ENCODE measurements at regions of chr22 and their contacts with region 1.

Region 1: GRCh38 chr22:32660292-32660691 is 141.2 kb upstream of the TIMP3 start:
- DNase-seq: peak; percentile 71
- H3K4me3 Mint-ChIP-seq: no peak overlapping the region
- H3K27ac Mint-ChIP-seq: no peak overlapping the region
- H3K4me1 Mint-ChIP-seq: peaks cover 7% of the 10 kb centered on the region
- H3K27me3 Mint-ChIP-seq: no peaks in the 10 kb centered on the region
- CTCF ChIP-seq: peak; percentile 93

Region 2: DNA sequence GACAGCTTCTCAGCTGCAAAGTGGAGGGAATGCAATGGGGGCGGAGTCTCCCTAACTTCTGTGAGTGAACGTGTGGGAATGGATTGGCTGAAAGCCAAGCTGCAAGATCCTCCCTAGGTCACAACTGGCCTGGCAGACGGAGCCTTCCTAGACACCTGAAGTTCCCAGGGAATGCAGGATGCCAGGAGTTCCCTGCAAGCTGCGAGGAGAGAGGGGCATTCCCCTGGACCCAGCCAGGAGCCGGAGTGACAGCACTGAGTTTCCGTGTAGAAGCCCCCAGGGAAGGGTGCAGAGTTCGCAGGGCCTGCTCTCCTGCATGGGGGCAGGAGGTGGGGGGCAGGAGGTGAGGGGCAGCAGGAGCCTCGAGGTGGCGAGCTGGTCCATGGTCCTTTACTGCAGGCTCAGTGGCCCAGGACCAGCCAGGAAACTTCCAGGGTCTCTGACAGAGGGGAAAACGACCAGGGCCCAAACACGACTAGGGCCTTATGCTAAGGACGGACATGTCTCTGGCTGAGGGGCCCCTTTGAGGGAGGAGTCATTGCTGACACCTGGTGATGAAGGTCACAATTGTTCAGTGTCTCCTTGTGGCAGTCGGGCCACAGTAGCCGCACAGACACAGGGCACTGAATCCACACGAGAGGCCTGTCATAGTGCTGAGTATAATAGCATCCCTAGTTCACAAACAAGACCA is 44.3 kb before region 1 on chr22:
- CTCF ChIA-PET with region 1: no interaction called
- POLR2A ChIA-PET with region 1: no interaction called
- intact Hi-C with region 1: no loop called
- DNase-seq: peak; percentile 31
- H3K4me3 Mint-ChIP-seq: no peak overlapping the region
- H3K27ac Mint-ChIP-seq: no peak overlapping the region
- H3K4me1 Mint-ChIP-seq: no peaks in the 10 kb centered on the region
- H3K27me3 Mint-ChIP-seq: no peaks in the 10 kb centered on the region
- CTCF ChIP-seq: no peak

Region 3: DNA sequence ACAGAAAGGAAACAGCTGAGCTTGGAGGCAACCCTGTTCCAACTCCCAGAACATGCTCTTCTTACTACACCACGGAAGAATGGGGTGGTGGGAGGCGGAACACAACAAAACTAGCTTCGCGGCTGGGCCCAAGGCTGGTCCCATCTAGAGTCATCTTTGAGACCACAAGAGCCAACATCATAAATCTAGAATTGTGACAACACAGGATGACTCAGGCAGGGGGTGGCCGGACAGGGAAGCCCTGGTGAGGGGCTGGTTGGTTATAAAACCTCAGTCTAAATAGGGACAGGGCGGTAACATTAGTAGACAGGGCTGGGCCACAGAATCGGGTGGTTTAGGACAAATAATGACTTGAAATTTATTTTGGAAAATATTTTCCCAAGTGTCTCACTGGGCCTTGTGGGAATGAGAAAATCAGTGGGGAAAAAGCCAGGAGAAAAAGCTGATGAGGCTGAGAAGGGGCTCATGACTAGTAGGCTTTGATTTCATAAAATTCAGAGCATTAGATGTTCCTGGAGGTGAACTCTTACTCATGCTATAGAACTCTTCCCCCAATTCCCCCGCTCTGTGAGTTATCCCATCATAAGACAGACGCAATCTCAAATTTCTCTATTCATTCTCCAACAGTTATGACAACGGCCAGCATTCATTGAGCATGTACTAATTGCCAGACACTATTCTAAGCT is 10.6 kb before region 1 on chr22:
- CTCF ChIA-PET with region 1: interaction called, 10 read pairs
- POLR2A ChIA-PET with region 1: interaction called, 4 read pairs
- intact Hi-C with region 1: no loop called
- DNase-seq: no peak
- H3K4me3 Mint-ChIP-seq: no peak overlapping the region
- H3K27ac Mint-ChIP-seq: peak overlapping the region; percentile 50
- H3K4me1 Mint-ChIP-seq: peaks cover 4% of the 10 kb centered on the region
- H3K27me3 Mint-ChIP-seq: no peaks in the 10 kb centered on the region
- CTCF ChIP-seq: no peak

Region 4: DNA sequence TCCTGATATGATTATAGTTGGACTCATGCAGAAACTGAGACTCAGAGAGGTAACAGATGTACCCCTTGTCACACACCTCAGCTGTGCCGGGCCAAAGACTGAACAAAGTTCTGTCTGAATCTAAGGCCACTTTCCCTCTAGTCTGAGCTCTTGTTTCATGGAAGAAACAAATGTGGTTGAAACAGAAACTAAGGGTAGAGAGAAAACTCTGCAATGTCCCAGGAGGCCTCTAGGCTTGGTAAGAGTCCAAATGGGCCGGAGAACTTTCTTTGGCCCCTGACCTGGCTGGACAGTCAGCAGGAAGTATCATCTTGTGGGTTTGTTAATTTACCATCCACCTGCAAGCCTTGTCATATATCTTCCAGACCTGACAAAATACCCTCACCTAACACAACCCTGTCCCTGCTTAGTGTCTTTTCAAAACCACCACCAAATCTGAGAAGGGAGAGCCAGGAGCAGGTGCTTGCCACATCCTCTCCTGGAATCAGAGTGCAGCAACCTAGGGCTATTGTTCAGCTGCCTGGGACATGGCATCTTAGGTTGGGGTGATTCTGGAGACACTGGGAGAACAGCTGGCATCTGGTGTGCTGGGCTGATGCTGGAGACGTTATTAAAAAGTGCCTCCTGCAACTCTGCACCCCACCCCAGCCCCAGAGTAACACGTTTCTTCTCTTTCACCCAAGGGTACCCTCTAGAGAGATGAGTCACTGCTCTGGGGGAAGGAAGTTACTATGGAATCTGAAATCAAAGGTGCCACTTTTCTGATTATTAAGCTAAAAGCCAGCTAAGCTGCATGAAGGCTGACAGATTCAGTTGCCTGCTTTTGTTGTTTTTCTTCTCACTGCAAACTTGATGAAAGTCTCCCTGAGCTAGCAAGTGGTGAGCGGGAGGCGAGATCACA is 14.9 kb after region 1 on chr22:
- CTCF ChIA-PET with region 1: interaction called, 10 read pairs
- POLR2A ChIA-PET with region 1: interaction called, 13 read pairs
- intact Hi-C with region 1: no loop called
- DNase-seq: no peak
- H3K4me3 Mint-ChIP-seq: no peak overlapping the region
- H3K27ac Mint-ChIP-seq: no peak overlapping the region
- H3K4me1 Mint-ChIP-seq: peaks cover 10% of the 10 kb centered on the region
- H3K27me3 Mint-ChIP-seq: peaks cover 9% of the 10 kb centered on the region
- CTCF ChIP-seq: no peak

Region 5: DNA sequence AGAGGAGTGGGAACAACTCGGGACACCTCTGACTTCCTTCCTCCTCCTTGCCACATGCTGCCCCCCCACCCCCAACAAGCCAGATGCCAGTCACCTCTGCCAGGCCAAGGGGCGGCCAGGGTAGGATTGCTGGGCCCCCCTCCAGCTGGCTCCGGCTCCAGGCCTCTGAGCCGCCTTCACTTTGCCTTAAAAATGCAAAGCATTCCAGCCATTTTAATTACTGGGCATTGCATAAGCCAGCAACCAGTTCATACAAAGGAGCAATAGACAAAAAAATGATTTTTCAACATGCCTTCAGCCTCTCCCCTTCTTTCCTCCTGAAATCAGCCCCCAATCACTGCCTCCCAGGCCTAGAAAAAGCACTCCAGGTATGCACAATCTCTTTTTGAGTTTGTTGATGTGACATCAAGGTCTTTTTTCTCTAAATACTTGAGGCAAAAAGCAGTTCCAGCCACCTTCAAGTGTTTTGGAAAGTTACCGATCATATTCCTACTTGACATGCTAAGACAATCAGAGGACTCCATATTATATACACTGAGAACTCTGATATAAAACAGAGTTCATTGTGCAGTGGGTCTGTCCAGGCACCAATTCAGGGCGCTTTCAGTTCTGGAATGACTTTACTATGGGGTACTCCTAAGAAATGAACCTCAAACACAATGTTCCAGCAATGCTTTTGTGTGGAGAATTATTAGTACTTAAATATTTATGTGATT is 128.8 kb after region 1 on chr22:
- CTCF ChIA-PET with region 1: interaction called, 205 read pairs
- POLR2A ChIA-PET with region 1: interaction called, 3 read pairs
- intact Hi-C with region 1: no loop called
- DNase-seq: no peak
- H3K4me3 Mint-ChIP-seq: no peak overlapping the region
- H3K27ac Mint-ChIP-seq: no peak overlapping the region
- H3K4me1 Mint-ChIP-seq: peaks cover 6% of the 10 kb centered on the region
- H3K27me3 Mint-ChIP-seq: no peaks in the 10 kb centered on the region
- CTCF ChIP-seq: no peak

Region 6: DNA sequence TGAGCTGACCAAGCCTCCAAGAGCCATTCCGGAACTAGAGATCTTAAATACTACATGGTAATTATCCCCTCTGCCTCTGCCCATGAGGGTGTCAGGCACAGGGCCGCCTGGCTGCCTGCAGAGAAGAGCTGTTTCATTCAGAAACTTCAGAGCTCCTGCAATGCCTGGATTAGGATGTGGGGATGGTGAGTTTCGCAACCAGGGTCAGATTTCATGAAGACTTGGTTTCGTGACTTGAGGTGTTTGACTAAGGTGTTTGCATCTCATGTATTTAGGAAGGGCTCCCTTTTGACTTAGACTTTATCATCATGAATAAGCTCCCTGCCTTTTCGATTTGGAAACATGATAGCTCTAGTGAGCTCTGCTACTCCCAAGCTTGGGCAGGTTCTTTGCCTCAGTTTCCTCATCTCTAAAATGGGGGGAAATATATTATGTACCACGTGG is 150.3 kb after region 1 on chr22:
- CTCF ChIA-PET with region 1: interaction called, 10 read pairs
- POLR2A ChIA-PET with region 1: no interaction called
- intact Hi-C with region 1: no loop called
- DNase-seq: peak; percentile 85
- H3K4me3 Mint-ChIP-seq: no peak overlapping the region
- H3K27ac Mint-ChIP-seq: no peak overlapping the region
- H3K4me1 Mint-ChIP-seq: peaks cover 17% of the 10 kb centered on the region
- H3K27me3 Mint-ChIP-seq: no peaks in the 10 kb centered on the region
- CTCF ChIP-seq: no peak

Region 7: DNA sequence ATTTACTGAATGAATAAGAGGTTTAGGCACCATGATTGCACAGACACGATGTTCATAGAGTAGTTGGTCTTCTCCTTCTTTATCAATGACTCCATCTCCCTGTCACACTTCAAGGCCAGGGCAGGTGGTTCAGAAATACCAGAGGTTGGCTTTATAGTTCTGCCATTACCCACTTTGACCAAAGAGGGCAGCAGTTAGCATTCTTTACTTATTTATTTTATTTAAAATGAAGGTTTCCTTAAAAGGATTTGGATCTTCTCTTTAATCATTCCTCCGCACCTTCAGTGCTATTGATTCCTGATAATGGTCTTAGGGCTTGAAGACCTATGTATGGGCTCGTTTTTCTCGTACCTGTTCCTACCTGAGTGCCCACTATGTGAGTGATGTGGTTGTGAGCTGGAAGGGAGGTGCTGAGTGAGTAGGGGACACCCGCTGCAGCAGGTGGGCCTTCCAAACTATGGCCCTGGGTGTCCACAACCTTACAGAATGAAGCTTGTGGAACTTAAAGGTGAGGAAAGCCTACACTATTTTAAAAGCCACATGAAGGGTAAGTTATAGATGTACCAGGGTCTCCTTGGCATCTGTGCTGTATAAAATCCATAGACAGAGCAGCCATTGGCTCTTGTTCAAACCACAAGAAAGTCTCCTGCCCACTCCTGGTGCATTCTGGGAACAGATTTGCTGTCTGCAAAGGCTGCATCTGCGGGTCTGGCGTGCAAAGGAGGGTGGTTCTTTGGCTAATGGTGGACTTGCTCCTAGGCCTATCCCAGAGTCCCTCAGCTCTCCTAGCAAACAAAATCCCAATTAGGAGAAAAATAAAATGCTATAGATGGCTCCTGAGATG is 176.2 kb after region 1 on chr22:
- CTCF ChIA-PET with region 1: no interaction called
- POLR2A ChIA-PET with region 1: no interaction called
- intact Hi-C with region 1: no loop called
- DNase-seq: peak; percentile 24
- H3K4me3 Mint-ChIP-seq: no peak overlapping the region
- H3K27ac Mint-ChIP-seq: no peak overlapping the region
- H3K4me1 Mint-ChIP-seq: peaks cover 7% of the 10 kb centered on the region
- H3K27me3 Mint-ChIP-seq: no peaks in the 10 kb centered on the region
- CTCF ChIP-seq: peak; percentile 51

Region 8: DNA sequence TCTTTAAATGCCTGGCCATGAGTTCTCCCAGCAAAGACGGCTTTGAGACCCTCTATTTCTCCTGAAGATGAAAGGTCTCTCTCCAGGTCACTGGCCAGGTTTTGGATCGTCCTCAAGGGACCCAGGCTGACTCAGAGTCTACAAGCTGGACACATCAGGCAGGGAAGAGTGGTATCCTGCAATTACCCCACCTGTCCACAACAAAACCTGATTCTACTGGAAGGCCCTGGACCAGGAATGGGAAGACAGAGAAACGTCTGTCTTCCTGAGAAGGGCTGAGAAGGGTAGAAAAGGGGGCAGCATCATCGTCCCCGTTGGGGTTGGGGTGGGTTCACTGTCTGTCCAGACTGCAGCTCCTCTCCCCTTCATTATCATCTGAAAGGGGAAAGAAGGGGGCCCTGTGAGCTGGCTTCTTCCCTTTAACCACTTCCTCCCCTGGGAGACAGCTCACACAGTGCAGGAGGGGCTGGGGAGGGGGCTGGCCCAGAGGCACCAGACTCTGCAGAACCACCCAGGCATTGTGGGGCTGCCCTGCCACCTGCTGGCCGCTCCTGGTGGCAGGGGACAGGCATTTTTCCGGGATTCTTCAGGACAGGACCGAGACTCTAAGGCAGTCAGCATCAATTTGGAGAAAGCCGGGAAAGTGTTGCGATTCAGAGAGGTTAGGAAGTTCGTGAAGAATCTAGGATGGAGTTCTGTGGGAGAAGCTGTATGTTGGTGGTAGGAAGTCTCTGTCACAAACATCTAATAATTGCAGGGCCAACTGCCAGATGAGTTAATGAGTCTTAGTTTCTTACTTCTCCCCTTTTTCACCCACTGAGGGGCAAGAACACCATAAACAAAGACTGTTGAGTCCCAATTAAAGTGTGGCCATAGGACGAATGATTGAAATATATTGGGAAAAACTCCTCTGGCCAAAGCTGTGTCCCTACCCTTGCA is 340.3 kb after region 1 on chr22:
- CTCF ChIA-PET with region 1: interaction called, 24 read pairs
- POLR2A ChIA-PET with region 1: interaction called, 4 read pairs
- intact Hi-C with region 1: loop called (anchors 1 kb)
- DNase-seq: peak; percentile 65
- H3K4me3 Mint-ChIP-seq: no peak overlapping the region
- H3K27ac Mint-ChIP-seq: peak overlapping the region; percentile 99
- H3K4me1 Mint-ChIP-seq: peaks cover 53% of the 10 kb centered on the region
- H3K27me3 Mint-ChIP-seq: no peaks in the 10 kb centered on the region
- CTCF ChIP-seq: peak; percentile 90